PC-9 (cell line): ENCODE measurements at regions of chr7 and their contacts with region 1.

Region 1: GRCh38 chr7:68295386-68295785 is 1298.8 kb downstream of the TYW1 start:
- DNase-seq: no peak
- H3K4me3 ChIP-seq: no peak overlapping the region
- H3K27ac ChIP-seq: no peak overlapping the region
- H3K4me1 ChIP-seq: no peaks in the 10 kb centered on the region
- H3K27me3 ChIP-seq: no peaks in the 10 kb centered on the region
- CTCF ChIP-seq: no peak

Region 2: DNA sequence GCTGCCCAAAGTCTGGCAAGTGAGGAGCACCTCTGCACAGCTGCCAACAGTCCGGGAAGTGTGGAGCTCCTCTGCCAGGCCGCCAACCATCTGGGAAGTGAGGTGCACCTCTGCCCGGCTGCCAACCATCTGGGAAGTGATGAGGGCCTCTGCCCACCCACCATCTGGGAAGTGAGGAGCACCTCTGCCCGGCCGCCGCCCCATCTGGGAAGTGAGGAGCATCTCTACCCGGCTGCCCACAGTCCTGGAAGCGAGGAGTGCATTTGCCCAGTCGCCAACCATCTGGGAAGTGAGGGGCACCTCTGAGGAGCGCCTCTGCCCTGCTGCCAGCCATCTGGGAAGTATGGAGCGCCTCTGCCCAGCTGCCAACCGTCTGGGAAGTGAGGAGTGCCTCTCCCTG is 405.1 kb before region 1 on chr7:
- CTCF ChIA-PET with region 1: no interaction called
- POLR2A ChIA-PET with region 1: no interaction called
- intact Hi-C with region 1: no loop called
- DNase-seq: no peak
- H3K4me3 ChIP-seq: no peak overlapping the region
- H3K27ac ChIP-seq: no peak overlapping the region
- H3K4me1 ChIP-seq: no peaks in the 10 kb centered on the region
- H3K27me3 ChIP-seq: peaks cover 60% of the 10 kb centered on the region
- CTCF ChIP-seq: no peak

Region 3: GRCh38 chr7:68309806-68310205 is 14.4 kb after region 1 on chr7:
- CTCF ChIA-PET with region 1: interaction called, 14 read pairs
- POLR2A ChIA-PET with region 1: no interaction called
- intact Hi-C with region 1: no loop called
- DNase-seq: no peak
- H3K4me3 ChIP-seq: no peak overlapping the region
- H3K27ac ChIP-seq: no peak overlapping the region
- H3K4me1 ChIP-seq: no peaks in the 10 kb centered on the region
- H3K27me3 ChIP-seq: no peaks in the 10 kb centered on the region
- CTCF ChIP-seq: no peak